Calu3 (cell line): ENCODE measurements at regions of chr1 and their contacts with region 1.

Region 1: DNA sequence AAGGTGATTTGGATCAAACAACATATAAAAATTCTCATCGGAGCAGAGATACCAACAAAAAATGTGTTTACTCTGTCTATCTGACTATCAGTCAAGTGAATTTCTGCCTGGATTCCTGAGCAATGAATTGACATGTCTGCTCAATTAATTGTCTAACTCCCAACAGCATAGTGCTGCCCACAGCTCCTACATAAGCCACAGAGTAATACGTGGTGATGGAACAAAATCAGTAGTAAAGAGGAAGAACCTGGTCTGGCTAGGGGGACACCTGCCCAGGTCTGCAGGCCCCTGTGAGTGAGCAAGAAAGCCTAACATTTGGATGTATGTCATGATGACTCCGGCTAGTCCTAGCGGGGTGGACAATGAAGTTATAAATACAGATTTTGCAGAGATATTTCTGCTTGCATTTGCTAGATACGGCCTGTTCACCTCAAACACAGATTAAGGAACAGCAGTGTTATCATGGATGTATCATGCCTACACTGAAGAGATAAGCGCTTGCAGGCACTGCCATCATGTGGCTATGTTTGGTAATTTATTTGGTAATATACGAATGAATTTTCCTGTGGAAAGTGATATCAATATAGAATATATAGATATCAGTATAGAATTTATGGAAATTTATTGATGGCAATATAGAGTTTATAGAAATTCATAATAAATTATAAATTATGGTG is 69.6 kb upstream of the LRRC8B start:
- DNase-seq: peak; percentile 50
- H3K4me3 Mint-ChIP-seq: no peak overlapping the region
- H3K27ac Mint-ChIP-seq: no peak overlapping the region
- H3K4me1 Mint-ChIP-seq: peaks cover 7% of the 10 kb centered on the region
- H3K27me3 Mint-ChIP-seq: no peaks in the 10 kb centered on the region
- CTCF ChIP-seq: peak; percentile 71

Region 2: DNA sequence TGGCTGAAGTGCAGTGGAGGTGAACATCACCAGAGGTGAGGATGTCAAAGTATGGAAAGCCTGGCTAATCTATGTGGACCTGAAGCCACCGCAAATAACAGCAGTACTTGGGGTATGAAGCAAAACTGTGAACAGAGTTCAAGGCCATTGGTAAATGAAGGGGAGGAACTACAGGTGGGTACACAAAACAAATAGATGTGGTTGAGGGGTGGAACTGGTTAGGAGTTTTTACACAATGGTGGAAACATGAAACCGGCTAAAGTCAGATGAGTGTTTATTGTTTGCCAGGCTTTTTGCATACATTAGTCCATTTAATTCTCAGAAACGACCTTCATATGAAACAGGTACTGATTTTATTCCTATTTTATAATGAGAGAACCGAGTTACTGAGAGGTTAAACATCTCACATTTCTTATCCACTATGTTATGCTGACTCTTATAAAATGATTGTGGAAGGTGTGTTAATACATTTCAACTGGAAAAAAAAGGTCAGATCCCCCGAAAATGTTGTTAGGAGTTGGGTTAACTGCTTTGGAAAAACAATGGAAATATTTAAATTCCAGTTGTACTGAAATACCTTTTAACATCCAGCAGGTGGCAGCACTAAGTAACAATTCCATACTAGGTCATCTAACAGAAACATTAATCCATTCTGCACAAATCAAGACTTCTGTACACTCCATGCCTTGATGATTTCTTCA is 519.3 kb before region 1 on chr1:
- CTCF ChIA-PET with region 1: no interaction called
- intact Hi-C with region 1: loop called (anchors 2 kb)
- DNase-seq: peak; percentile 10
- H3K4me3 Mint-ChIP-seq: no peak overlapping the region
- H3K27ac Mint-ChIP-seq: no peak overlapping the region
- H3K4me1 Mint-ChIP-seq: no peaks in the 10 kb centered on the region
- H3K27me3 Mint-ChIP-seq: no peaks in the 10 kb centered on the region
- CTCF ChIP-seq: peak; percentile 29

Region 3: DNA sequence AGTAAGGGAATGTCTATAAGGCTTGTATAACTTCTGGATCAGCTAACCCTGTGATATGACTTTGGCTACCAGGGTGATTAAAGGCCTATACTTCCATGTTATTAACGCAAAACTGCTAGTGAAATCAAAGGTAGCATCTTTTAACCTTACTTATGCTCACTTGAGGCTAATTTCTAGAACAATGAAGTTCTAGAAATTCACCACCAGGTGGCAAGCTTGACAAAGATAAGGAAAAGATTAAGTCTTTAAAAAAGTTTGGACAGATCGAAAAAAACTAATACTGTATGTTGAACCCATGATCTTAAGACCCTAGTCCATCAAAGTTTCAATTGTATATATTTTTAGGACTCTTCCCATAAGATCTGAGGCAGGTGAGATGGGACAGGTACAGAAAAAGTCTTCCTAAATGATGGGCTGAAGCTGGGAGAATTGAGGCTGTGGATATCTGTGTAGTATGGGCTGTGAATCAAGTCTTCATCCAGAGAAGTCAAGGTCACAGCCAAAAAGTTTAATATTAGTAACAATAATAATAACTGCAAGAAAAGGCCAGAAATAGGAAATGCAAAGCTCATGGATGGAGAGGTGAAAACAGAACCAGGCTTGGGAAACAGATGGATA is 481.4 kb before region 1 on chr1:
- CTCF ChIA-PET with region 1: no interaction called
- intact Hi-C with region 1: loop called (anchors 1 kb)
- DNase-seq: no peak
- H3K4me3 Mint-ChIP-seq: no peak overlapping the region
- H3K27ac Mint-ChIP-seq: no peak overlapping the region
- H3K4me1 Mint-ChIP-seq: peaks cover 9% of the 10 kb centered on the region
- H3K27me3 Mint-ChIP-seq: no peaks in the 10 kb centered on the region
- CTCF ChIP-seq: peak; percentile 63

Region 4: GRCh38 chr1:88998716-88999115 is 456.3 kb before region 1 on chr1:
- CTCF ChIA-PET with region 1: interaction called, 4 read pairs
- intact Hi-C with region 1: loop called (anchors 1 kb)
- DNase-seq: peak; percentile 35
- H3K4me3 Mint-ChIP-seq: no peak overlapping the region
- H3K27ac Mint-ChIP-seq: no peak overlapping the region
- H3K4me1 Mint-ChIP-seq: peaks cover 9% of the 10 kb centered on the region
- H3K27me3 Mint-ChIP-seq: no peaks in the 10 kb centered on the region
- CTCF ChIP-seq: peak; percentile 29

Region 5: DNA sequence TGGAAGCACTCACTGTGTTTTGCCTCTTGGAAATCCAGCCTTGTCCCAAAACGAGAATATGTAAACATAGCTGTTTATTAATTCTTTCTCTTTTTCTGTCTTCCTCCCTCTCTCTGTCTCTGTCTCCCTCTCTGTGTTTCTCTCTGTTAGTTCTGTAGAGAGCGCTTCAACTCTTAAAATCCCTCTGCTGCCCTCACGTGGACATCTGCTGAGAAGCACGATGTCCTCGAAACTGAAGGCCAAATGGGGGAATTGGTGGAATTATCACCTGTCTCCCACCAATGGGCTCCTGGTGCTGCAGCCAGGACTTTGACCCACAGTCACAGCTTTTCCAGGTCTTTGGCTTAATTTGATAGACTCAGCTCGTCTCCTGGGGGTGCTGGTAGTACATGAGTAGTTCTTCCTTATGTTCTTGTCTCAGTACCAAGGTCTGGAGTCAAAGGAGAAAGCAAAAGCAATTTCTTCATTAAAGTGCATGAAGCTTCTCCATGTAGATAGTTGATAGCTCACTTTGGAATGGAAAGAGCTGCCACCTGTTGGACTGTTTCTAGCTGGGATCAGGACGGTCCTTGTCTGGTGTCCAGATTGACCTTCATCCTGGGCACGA is 96.6 kb before region 1 on chr1:
- CTCF ChIA-PET with region 1: no interaction called
- intact Hi-C with region 1: loop called (anchors 2 kb)
- DNase-seq: peak; percentile 78
- H3K4me3 Mint-ChIP-seq: no peak overlapping the region
- H3K27ac Mint-ChIP-seq: no peak overlapping the region
- H3K4me1 Mint-ChIP-seq: peaks cover 13% of the 10 kb centered on the region
- H3K27me3 Mint-ChIP-seq: no peaks in the 10 kb centered on the region
- CTCF ChIP-seq: peak; percentile 61

Region 6: GRCh38 chr1:89483010-89483756 is 28.2 kb after region 1 on chr1:
- CTCF ChIA-PET with region 1: no interaction called
- intact Hi-C with region 1: no loop called
- DNase-seq: peak; percentile 71
- H3K4me3 Mint-ChIP-seq: no peak overlapping the region
- H3K27ac Mint-ChIP-seq: no peak overlapping the region
- H3K4me1 Mint-ChIP-seq: no peaks in the 10 kb centered on the region
- H3K27me3 Mint-ChIP-seq: no peaks in the 10 kb centered on the region
- CTCF ChIP-seq: no peak